Esophagus muscularis mucosa (tissue), 4 donors: ENCODE measurements at regions of chr21 and their contacts with region 1.

Region 1: DNA sequence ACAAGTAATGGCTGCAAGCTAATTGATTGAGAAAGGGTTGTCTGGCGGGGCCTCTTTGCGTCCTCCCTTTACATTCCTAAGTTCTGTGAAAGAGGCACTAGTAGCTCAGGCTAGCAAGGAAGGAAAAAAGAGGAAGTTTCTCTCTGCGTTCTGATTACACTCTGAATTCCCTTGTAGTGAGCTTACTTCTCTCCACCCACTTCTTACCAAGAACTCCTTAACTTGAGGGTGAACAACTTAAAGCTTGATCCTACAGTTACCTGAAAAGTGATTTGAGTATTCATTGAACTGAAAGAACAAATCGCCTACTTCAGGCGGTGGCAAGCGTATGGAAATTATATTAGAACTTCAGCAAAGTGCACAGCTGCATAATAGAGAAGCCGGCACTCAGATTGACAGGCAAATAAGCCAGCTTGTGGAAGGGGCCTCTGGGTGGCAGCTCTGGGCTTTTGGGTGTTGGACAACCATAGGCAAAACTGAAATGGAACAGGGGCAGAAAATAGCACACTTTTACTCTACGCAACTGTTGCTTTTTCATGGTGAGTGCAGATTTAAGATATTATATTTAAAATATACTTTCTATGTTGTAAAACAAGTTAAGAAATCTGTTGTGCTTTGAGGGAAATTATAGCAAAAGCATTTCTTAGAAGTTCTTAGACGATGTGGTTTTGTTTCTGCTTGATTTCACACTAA is 464.5 kb downstream of the USP25 start:
- DNase-seq: no peak
- H3K4me3 ChIP-seq: peak overlapping the region; percentile 30 to 57 (median 44)
- H3K27ac ChIP-seq: peak overlapping the region; percentile 62 to 74 (median 66)
- H3K4me1 ChIP-seq: no peaks in the 10 kb centered on the region
- H3K27me3 ChIP-seq: no peaks in the 10 kb centered on the region
- CTCF ChIP-seq: peak in 1 of 3 experiments; percentile 11
- EP300 ChIP-seq: no peak
- POLR2A ChIP-seq: no peak

Region 2: GRCh38 chr21:16058896-16059295 is 135.3 kb before region 1 on chr21:
- intact Hi-C with region 1: no loop called
- DNase-seq: no peak
- H3K4me3 ChIP-seq: no peak overlapping the region
- H3K27ac ChIP-seq: no peak overlapping the region
- H3K4me1 ChIP-seq: no peaks in the 10 kb centered on the region
- H3K27me3 ChIP-seq: no peaks in the 10 kb centered on the region
- CTCF ChIP-seq: no peak
- EP300 ChIP-seq: no peak
- POLR2A ChIP-seq: no peak

Region 3: GRCh38 chr21:16258844-16259611 is 64.8 kb after region 1 on chr21:
- intact Hi-C with region 1: no loop called
- DNase-seq: no peak
- H3K4me3 ChIP-seq: no peak overlapping the region
- H3K27ac ChIP-seq: no peak overlapping the region
- H3K4me1 ChIP-seq: no peaks in the 10 kb centered on the region
- H3K27me3 ChIP-seq: no peaks in the 10 kb centered on the region
- CTCF ChIP-seq: no peak
- EP300 ChIP-seq: no peak
- POLR2A ChIP-seq: no peak

Region 4: DNA sequence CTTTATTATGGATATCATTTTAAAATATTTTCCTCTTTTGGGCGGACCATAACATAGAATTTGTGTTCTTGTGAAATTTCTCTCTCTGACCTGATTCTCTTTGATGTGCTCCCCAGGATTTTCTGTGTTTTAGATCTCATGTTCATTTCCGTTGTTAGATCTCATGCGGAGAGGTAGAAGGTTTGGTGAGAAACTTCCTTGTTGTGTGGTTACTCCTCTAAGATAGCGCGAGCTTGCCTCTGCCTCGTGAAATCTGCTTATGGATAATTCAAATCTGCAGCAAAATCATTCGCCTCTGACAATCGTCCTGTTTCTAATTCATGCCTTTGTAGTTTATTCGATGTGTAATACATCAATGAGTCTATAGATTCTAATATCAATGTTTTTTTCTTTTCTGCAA is 115.9 kb after region 1 on chr21:
- intact Hi-C with region 1: loop called (anchors 10 kb)
- DNase-seq: no peak
- H3K4me3 ChIP-seq: no peak overlapping the region
- H3K27ac ChIP-seq: no peak overlapping the region
- H3K4me1 ChIP-seq: no peaks in the 10 kb centered on the region
- H3K27me3 ChIP-seq: no peaks in the 10 kb centered on the region
- CTCF ChIP-seq: no peak
- EP300 ChIP-seq: no peak
- POLR2A ChIP-seq: no peak